ENCODE measurements at regions of chr1 and their contacts with region 1.

Region 1: DNA sequence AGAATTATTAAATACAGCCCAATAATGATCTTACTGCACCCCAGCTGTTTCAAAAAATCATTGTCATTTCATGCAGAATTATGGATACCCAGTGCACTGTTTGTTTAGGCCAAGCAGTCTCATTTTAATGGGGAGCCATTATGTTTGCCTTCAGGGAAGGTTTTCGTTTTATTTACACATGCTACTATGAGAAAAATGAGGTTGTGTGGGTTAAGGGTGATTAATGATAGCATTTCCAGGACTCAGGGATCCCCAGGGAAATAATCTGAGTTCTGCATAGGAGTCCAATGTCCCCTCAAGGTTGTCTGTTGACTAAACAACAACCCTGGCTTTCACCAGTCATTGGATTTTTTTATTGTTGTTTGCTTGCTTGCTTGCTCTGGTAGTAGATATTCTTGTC is 71.0 kb upstream of the ZP4 start:
- DNase-seq: no peak
- H3K4me3 ChIP-seq: no peak overlapping the region
- CTCF ChIP-seq: no peak

Region 2: DNA sequence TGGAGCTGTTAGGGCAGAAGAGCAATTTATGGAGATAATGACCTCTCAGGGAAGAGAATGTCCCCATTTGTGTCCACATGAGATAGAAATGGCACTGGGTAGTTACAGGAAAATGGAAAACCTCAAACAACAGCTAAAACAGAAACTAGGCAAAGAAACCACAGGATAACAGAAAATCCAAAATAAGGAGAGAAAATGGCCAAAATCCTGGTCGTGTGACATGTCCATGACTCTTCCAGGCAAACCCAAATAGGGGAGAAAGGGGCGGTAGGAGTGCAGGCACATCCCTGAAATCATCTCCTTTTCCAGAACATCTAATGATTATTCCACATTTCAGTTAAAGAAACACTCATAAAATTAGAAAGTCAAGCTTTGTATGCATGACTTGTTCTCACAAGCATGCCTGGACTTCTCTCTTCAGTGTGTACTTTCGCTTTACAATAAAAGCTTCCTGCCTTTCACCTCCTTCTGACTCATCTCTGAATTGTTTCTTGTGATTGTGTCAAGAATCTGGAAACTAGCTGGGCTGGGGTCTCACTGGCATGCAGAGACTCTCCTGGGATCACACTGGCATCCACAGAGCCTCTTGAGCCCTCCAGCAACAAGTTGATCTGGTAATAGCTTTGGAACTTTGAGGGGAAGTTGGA is 100.3 kb after region 1 on chr1:
- in situ Hi-C with region 1: no loop called
- DNase-seq: peak; percentile 57
- H3K4me3 ChIP-seq: no peak overlapping the region
- CTCF ChIP-seq: no peak

Region 3: GRCh38 chr1:238619652-238620051 is 657.9 kb after region 1 on chr1:
- in situ Hi-C with region 1: loop called (anchors 10 kb)
- DNase-seq: no peak
- H3K4me3 ChIP-seq: no peak overlapping the region
- CTCF ChIP-seq: no peak